Activated CD8-positive, alpha-beta memory T cell treated with anti-CD3 and anti-CD28 coated beads, Interleukin-2, amount 10 ng/mL, durations not matched to agents 7 days and 5 days (primary cell): ENCODE measurements at regions of chr17 and their contacts with region 1.

Region 1: DNA sequence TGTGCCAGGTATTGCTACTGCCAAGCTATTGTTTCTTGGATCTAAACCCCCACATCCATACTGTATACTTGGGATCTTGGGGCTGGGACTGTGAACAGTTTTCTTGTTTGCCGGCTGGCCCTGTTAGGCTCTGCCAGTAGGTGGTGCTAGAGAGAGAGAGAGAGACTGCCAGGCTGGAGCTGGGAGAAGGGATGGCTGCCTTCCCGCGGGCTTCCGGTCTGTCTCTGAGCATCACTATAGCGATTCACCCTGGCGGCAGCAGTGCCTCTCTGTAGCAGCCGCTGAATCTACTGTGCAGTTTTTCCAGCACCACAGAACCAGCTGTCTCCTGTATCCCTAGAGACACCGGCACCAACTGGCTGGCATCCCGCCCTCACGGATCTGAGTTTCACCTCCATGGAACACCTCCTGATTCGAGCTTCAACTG is 201.2 kb downstream of the UTP18 start:
- DNase-seq: peak; percentile 55
- ATAC-seq: peak; percentile 61
- H3K4me3 Mint-ChIP-seq: no peak overlapping the region
- H3K27ac Mint-ChIP-seq: no peak overlapping the region
- H3K4me1 Mint-ChIP-seq: no peaks in the 10 kb centered on the region
- H3K27me3 Mint-ChIP-seq: peaks cover 9% of the 10 kb centered on the region

Region 2: DNA sequence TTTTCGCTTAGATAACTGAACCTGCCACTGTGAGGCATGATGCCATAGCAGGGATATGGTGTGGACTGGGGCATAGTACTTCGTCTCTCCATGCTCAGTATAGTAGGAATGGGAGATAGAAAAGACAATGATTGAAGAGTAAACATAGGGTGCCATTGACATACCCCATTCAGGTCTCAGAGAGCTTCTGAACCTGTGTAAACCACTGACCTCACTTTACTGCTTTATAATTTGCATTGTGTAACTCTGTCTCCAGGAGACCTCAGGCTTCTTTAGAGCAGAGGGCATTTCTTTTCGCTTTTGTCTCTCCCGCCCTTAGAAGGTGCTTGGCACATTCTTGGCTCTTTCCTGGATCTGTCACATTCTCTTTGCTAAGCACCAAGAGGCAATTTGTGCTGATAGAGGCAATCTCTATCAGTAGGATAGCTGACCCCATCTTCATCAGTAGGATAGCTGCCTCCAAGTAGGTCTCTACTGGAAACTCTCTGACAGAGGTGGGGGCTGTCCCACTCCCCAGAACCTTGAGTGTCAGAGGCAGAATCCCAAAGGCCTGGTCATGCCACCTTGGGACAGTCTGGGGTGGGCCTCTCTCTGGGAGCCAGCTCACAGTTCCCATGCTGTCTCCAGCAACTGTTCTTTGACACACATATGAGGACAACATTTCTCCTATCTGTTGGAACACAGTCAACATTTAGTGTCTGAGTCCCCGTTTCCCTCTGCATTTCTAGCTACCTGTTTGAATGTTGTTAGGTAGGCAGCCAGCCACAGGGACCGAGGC is 19.3 kb before region 1 on chr17:
- CTCF ChIA-PET with region 1: interaction called, 12 read pairs
- DNase-seq: no peak
- ATAC-seq: no peak
- H3K4me3 Mint-ChIP-seq: no peak overlapping the region
- H3K27ac Mint-ChIP-seq: no peak overlapping the region
- H3K4me1 Mint-ChIP-seq: peaks cover 16% of the 10 kb centered on the region
- H3K27me3 Mint-ChIP-seq: peaks cover 17% of the 10 kb centered on the region